ENCODE measurements at regions of chr1 and their contacts with region 1.

Region 1: DNA sequence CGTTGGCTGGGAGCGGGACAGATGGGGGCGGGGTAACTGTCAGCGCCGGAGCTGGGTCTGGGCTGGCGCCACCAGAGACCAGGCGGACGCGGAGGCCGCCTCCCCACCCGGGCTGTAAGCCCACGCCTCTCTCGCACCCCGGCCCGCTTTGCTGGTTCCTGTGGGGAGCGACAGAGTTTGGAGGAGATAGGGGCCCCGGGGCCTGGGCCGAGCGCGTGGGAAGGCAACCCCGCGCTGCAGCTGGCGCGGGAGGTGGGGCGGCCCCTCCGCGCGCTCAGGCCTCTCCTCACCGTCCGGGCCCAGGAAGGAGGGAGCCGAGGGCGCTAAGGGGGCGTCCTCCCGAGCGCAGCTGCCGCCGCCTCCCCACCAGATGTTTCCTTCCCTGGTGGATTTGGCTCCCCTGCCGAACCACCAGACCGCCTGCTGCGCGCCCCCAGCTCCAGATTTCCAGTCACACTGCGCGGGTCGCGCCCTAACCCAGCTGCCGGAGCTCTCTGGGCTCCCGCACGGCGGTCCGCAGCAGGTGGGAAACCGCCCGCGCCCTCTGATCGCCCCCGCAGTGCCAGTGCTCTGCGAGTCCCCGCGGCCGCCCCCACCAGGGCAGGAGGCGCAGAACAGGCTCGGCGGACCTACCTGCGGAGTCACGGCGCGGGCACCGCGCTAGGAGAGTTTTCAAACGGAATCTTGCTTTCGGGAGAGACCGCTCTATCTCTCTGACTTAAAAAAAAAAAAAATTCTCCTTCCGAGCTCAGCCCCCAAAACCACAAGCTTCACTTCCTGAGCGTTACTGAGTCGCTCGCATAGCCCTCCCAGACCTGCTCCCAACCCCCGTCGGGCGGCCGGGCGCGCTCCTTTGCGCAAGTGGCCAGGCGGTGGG is 1.1 kb downstream of the GFI1 start:
- DNase-seq: peak; percentile 67
- ATAC-seq: peak; percentile 70
- H3K4me3 Mint-ChIP-seq: peak overlapping the region; percentile 90
- H3K27ac Mint-ChIP-seq: no peak overlapping the region
- H3K4me1 Mint-ChIP-seq: peaks cover 27% of the 10 kb centered on the region
- H3K27me3 Mint-ChIP-seq: peaks cover 14% of the 10 kb centered on the region
- CTCF ChIP-seq: no peak

Region 2: GRCh38 chr1:92310185-92310597 is 175.4 kb before region 1 on chr1:
- CTCF ChIA-PET with region 1: interaction called, 4 read pairs
- POLR2A ChIA-PET with region 1: no interaction called
- intact Hi-C with region 1: loop called (anchors 1 kb)
- DNase-seq: no peak
- ATAC-seq: peak; percentile 37
- H3K4me3 Mint-ChIP-seq: no peak overlapping the region
- H3K27ac Mint-ChIP-seq: no peak overlapping the region
- H3K4me1 Mint-ChIP-seq: no peaks in the 10 kb centered on the region
- H3K27me3 Mint-ChIP-seq: no peaks in the 10 kb centered on the region
- CTCF ChIP-seq: no peak

Region 3: GRCh38 chr1:92404661-92405060 is 81.0 kb before region 1 on chr1:
- CTCF ChIA-PET with region 1: no interaction called
- POLR2A ChIA-PET with region 1: no interaction called
- intact Hi-C with region 1: loop called (anchors 5 kb)
- DNase-seq: no peak
- ATAC-seq: no peak
- H3K4me3 Mint-ChIP-seq: no peak overlapping the region
- H3K27ac Mint-ChIP-seq: no peak overlapping the region
- H3K4me1 Mint-ChIP-seq: peaks cover 2% of the 10 kb centered on the region
- H3K27me3 Mint-ChIP-seq: no peaks in the 10 kb centered on the region
- CTCF ChIP-seq: no peak

Region 4: DNA sequence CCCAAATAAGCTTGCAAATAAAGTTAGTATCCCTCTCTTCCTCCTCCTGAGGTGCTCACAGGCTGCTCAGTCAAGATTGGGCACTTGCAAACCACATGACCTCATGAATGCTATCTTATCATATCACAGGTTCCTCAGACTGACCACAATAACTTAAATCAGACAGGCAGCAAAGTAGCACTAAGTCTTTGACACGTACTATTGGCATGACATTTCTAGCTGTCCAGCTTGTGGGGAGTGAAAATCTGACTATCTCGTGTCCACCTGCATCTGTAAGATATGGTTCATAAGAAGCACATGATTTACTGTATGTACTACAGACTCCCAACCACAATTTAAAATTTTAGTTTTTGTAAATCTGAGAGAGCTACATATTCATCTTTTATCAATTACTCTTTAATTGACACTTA is 59.1 kb after region 1 on chr1:
- CTCF ChIA-PET with region 1: no interaction called
- POLR2A ChIA-PET with region 1: no interaction called
- intact Hi-C with region 1: no loop called
- DNase-seq: no peak
- ATAC-seq: no peak
- H3K4me3 Mint-ChIP-seq: no peak overlapping the region
- H3K27ac Mint-ChIP-seq: no peak overlapping the region
- H3K4me1 Mint-ChIP-seq: no peaks in the 10 kb centered on the region
- H3K27me3 Mint-ChIP-seq: no peaks in the 10 kb centered on the region
- CTCF ChIP-seq: no peak